Panc1 (cell line): ENCODE measurements at regions of chr22 and their contacts with region 1.

Region 1: GRCh38 chr22:36470162-36470993 is 11.1 kb downstream of the TXN2 start:
- DNase-seq: no peak
- ATAC-seq: peak; percentile 80
- H3K4me3 ChIP-seq: no peak overlapping the region
- H3K27ac ChIP-seq: peak overlapping the region; percentile 77
- H3K4me1 ChIP-seq: peaks cover 45% of the 10 kb centered on the region
- H3K27me3 ChIP-seq: no peaks in the 10 kb centered on the region
- CTCF ChIP-seq: peak; percentile 92

Region 2: DNA sequence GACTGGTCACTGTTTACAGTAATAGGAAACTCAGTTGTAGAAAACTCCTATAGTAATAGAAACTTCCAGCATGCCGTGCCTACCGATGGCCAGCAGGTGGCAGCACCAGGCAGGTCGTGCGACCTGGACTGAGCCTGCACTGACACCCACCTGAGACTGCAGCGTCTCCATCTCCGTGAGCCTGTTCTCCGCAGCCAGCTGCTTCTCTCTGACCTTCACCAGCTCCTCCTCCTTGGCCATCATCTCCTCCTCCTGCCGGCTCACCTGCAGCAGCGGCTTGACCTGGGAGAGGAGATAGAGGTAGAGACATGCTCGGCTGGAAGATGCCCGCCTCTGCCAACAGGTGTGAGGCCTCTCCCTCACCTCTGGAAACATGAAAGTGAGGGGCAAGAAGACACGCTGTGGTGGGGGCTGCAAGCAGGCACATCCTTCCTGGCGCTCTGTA is 169.0 kb before region 1 on chr22:
- CTCF ChIA-PET with region 1: no interaction called
- POLR2A ChIA-PET with region 1: interaction called, 13 read pairs
- in situ Hi-C with region 1: no loop called
- intact Hi-C with region 1: loop called (anchors 5 kb)
- DNase-seq: no peak
- ATAC-seq: peak; percentile 68
- H3K4me3 ChIP-seq: no peak overlapping the region
- H3K27ac ChIP-seq: peak overlapping the region; percentile 71
- H3K4me1 ChIP-seq: peaks cover 21% of the 10 kb centered on the region
- H3K27me3 ChIP-seq: no peaks in the 10 kb centered on the region
- CTCF ChIP-seq: peak; percentile 89

Region 3: GRCh38 chr22:36546932-36547331 is 76.6 kb after region 1 on chr22:
- CTCF ChIA-PET with region 1: no interaction called
- POLR2A ChIA-PET with region 1: no interaction called
- in situ Hi-C with region 1: no loop called
- intact Hi-C with region 1: no loop called
- DNase-seq: peak; percentile 76
- ATAC-seq: peak; percentile 92
- H3K4me3 ChIP-seq: peak overlapping the region in 1 of 2 experiments; percentile 50; a peak in 2 of 4 replicates
- H3K27ac ChIP-seq: peak overlapping the region; percentile 81
- H3K4me1 ChIP-seq: peaks cover 29% of the 10 kb centered on the region
- H3K27me3 ChIP-seq: no peaks in the 10 kb centered on the region
- CTCF ChIP-seq: no peak